Panc1 (cell line): ENCODE measurements at regions of chr10 and their contacts with region 1.

Region 1: DNA sequence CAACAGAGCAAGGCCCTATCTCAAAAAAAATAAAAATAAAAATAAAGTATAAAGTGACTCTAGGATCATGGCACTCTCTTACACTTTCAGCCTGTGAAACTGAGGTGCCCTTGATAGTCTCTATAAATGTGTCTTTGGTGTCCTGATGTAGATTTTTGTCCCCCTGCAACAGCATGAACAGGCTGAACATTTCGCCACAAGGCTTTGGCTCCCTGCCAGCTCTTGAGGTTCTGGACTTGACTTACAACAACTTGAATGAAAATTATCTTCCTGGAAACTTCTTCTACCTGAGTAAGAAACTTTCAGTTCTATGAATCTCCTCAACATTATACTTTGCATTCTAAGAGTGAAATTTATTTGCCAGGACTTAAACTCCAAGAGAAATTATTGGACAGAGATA is 48.1 kb upstream of the BMS1 start:
- DNase-seq: no peak
- ATAC-seq: no peak
- H3K4me3 ChIP-seq: no peak overlapping the region
- H3K27ac ChIP-seq: no peak overlapping the region
- H3K4me1 ChIP-seq: no peaks in the 10 kb centered on the region
- H3K27me3 ChIP-seq: peaks cover 10% of the 10 kb centered on the region
- CTCF ChIP-seq: no peak

Region 2: DNA sequence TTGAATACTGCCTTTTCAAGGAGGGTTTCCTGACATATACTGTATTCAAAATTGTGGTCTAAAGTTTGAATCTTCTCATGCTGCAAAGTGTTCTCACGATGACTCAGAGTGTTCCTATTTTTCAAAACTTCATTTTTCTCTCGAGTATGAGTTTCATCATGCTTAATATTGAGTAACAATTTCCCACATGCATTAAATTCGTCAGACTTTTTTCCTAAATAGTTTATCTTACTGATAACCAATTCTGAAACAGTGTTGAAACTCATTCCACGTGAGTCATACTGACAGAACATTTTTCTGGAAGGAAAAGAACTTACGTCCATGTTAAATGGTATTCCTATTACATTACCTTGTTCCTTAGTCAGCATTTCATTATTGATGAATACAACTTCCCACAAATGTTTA is 140.3 kb before region 1 on chr10:
- CTCF ChIA-PET with region 1: no interaction called
- POLR2A ChIA-PET with region 1: no interaction called
- in situ Hi-C with region 1: no loop called
- intact Hi-C with region 1: no loop called
- DNase-seq: no peak
- ATAC-seq: no peak
- H3K4me3 ChIP-seq: no peak overlapping the region
- H3K27ac ChIP-seq: no peak overlapping the region
- H3K4me1 ChIP-seq: no peaks in the 10 kb centered on the region
- H3K27me3 ChIP-seq: no peaks in the 10 kb centered on the region
- CTCF ChIP-seq: no peak

Region 3: DNA sequence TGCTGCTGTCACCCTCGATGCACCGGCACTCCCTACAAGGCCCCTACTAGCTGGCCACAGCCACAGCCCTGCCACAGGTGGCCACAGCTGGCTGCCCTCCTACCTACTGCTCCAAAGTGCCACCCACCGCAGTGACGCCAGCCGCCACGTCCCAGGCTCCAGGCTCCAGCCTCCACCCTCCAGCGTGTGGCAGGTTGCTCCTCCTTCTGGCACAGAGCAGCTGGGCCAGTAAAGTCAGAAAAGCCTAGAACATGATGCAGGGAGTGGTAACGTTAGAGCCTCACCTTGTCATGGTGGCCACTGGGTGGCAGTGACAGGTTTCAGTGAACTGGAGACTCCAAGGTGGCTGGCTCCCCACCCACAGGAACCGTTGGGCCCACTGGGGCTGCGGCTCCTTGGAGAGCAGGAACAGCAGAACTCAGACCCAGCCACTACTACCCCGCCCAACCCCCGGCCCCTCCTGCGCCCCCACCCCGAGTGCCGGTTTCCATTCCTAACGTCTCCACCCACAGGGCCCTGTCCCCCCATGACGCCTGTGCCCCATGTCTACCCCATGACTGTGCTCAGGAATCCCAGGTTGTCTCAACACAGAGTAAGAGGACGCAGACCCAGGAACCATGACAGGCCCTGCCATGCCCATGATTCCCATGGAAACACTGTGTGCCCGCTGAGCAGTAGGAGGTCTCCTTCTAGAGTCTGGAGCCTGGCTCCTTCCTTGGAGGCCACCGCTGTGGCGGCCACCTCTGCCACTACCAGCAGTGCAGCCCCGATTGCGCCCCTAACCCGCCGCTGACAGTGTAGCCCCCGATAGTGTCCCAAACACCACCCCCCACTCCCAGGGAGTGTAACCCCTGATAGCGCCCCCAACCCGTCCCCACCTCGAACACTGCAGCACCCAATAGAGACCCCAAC is 43.8 kb before region 1 on chr10:
- CTCF ChIA-PET with region 1: interaction called, 13 read pairs
- POLR2A ChIA-PET with region 1: no interaction called
- in situ Hi-C with region 1: no loop called
- intact Hi-C with region 1: no loop called
- DNase-seq: no peak
- ATAC-seq: peak; percentile 89
- H3K4me3 ChIP-seq: peak overlapping the region in 1 of 2 experiments; percentile 38; a peak in 1 of 4 replicates
- H3K27ac ChIP-seq: no peak overlapping the region
- H3K4me1 ChIP-seq: no peaks in the 10 kb centered on the region
- H3K27me3 ChIP-seq: no peaks in the 10 kb centered on the region; the same call in 1 of the 2 replicates
- CTCF ChIP-seq: peak; percentile 57

Region 4: DNA sequence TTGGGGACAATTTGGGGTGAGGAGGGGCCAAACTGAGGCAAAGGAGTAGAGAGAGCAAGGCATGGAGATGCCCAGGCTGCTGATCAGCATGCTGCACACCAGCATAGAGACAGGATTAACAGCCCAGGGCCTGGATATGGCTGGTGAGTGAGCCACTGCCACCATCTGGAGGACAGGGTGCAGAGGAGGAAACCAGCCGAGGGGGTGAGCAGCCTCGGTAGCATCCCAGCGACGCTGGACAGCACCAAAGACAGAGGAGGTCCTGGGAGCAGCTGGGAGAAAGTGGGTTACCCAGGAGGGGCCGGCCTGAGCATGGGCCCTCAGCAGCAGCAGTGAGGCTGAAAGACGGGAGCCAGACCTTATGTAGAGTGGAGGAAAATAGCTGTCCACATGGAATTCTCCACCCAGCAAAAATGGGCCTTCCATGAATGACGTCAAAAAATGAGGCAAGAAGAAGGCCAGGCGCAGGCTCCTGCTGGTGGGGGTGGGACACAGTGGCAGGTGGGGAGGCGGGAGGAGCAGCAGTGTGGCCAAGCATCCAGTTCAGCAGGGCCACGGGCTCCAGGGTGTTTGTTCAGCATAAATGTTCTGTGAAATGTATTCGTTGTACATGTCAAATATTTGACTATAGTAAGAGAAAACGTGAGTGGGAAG is 359.0 kb after region 1 on chr10:
- CTCF ChIA-PET with region 1: no interaction called
- POLR2A ChIA-PET with region 1: no interaction called
- in situ Hi-C with region 1: no loop called
- intact Hi-C with region 1: no loop called
- DNase-seq: no peak
- ATAC-seq: peak; percentile 86
- H3K4me3 ChIP-seq: no peak overlapping the region
- H3K27ac ChIP-seq: no peak overlapping the region
- H3K4me1 ChIP-seq: peaks cover 5% of the 10 kb centered on the region; the same call in 1 of the 2 replicates
- H3K27me3 ChIP-seq: no peaks in the 10 kb centered on the region
- CTCF ChIP-seq: no peak